ENCODE measurements at regions of chr17 and their contacts with region 1.

Region 1: DNA sequence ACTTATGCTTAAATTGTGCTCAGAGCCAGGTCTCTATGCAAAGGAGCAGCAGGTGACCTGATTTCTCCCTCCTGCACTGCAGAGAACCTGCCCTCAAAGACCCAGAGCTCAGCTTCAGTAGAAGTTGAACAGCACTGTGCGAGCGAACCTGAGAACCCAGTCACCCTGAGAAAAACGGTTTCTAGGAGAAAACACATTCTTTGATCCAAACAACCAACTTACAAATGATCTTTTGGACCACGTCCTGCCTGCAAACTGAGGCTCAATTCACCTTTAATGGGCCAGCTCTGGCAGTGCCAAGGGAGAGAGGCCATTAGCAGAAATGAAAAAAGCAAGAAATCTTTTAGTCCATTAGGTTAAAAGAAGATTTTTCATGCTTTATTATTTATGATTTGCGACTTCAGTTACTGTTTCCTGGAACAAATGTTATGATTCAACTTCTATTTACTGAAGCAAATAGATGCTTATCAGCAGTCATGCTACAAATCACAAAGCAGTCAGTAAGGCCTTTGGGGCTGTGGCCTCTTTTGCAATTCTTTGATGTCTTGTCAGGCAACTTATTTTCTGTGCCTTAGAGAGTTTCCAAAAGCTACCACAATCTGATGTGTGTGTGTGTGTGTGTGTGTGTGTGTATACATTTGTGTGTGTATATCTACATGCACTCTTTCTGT is 65.7 kb upstream of the LRRC37A3 start:
- DNase-seq: peak; percentile 75
- ATAC-seq: peak; percentile 63
- H3K4me3 Mint-ChIP-seq: peak overlapping the region; percentile 74
- H3K27ac Mint-ChIP-seq: peak overlapping the region; percentile 99
- H3K4me1 Mint-ChIP-seq: peaks cover 47% of the 10 kb centered on the region
- H3K27me3 Mint-ChIP-seq: no peaks in the 10 kb centered on the region

Region 2: GRCh38 chr17:64968652-64969501 is 16.1 kb before region 1 on chr17:
- CTCF ChIA-PET with region 1: interaction called, 31 read pairs
- POLR2A ChIA-PET with region 1: interaction called, 96 read pairs
- DNase-seq: no peak
- ATAC-seq: no peak
- H3K4me3 Mint-ChIP-seq: peak overlapping the region; percentile 30
- H3K27ac Mint-ChIP-seq: peak overlapping the region; percentile 82
- H3K4me1 Mint-ChIP-seq: peaks cover 69% of the 10 kb centered on the region
- H3K27me3 Mint-ChIP-seq: no peaks in the 10 kb centered on the region

Region 3: DNA sequence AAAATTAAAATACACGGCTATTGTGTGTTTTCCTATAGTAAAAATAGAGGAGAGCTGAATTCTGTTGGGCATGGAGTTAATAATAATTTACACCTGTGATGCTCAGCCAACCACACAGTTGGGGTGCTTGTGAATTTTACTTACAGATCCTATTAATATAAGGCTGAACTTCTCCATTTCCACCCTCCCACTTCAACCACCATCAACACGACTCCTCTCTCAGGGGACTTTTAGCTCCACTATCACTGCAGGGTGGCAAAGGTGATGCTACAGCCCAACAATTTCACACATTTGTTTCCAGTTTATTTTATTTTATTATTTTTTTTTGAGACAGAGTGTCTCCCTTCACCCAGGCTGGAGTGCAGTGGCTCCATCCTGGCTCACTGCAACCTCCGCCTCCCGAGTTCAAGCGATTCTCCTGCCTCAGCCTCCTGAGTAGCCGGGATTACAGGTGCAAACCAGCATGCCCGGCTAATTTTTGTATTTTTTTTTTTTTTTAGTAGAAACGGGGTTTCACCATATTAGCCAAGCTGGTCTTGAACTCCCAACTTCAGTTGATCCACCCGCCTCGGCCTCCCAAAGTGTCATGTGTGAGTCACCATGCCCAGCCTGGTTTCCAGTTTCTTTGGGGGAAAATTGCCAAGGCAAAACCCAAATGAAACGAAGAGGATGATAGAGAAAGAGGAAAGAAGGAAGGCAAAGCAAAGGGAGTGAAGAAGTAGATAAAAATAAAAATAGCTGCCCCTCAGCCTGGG is 13.6 kb after region 1 on chr17:
- CTCF ChIA-PET with region 1: no interaction called
- POLR2A ChIA-PET with region 1: no interaction called
- DNase-seq: no peak
- ATAC-seq: no peak
- H3K4me3 Mint-ChIP-seq: no peak overlapping the region
- H3K27ac Mint-ChIP-seq: no peak overlapping the region
- H3K4me1 Mint-ChIP-seq: no peaks in the 10 kb centered on the region
- H3K27me3 Mint-ChIP-seq: no peaks in the 10 kb centered on the region

Region 4: DNA sequence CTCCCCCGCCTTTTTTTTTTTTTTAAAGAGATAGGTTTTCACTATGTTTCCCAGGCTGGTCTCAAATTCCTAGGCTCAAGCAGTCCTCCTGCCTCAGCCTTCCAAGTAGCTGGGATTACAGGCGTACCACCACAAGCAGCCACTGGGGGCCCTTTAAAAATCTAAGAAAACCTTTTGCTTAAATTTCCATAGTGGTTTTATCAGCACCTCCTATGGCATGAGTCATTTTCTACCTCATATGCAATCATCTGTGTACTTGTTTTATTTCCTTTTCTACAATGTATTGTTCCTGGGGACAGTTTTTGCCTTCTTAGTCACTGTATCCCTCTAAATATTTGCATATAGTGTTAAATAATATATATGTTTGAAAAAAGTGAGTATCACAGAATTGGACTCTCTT is 42.3 kb after region 1 on chr17:
- CTCF ChIA-PET with region 1: interaction called, 3 read pairs
- POLR2A ChIA-PET with region 1: interaction called, 11 read pairs
- DNase-seq: peak; percentile 59
- ATAC-seq: peak; percentile 76
- H3K4me3 Mint-ChIP-seq: no peak overlapping the region
- H3K27ac Mint-ChIP-seq: peak overlapping the region; percentile 23
- H3K4me1 Mint-ChIP-seq: peaks cover 63% of the 10 kb centered on the region
- H3K27me3 Mint-ChIP-seq: no peaks in the 10 kb centered on the region

Region 5: DNA sequence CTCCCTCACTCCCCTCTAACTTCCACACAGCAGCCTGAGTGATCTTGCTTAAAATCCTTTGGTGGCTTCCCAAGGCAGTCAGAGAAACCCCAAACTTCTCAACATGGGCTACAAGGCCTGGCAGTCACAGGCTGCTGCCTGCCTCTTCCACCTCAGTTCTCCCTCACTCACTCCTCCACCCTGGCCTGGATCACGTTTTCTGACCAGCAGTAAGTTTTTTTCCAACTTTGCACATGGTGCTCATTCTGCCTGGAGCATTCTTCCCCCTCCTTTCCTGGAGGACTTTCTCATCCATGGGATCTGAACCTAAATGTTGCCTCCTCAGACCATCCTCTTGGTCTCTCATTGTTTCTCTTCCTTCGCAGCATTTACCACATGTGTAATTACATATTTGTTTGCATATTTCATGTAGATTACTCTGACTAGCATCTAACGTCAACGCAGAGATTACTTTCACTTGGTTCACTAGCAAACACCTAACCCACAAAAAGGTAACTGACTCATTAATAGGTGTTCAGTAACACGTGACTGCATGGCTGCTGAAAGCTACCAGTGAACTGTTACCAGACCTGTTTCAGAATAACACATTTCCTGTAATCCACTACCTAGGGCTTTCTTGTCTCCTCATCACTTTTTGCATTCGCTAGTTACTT is 54.5 kb after region 1 on chr17:
- CTCF ChIA-PET with region 1: no interaction called
- POLR2A ChIA-PET with region 1: interaction called, 14 read pairs
- DNase-seq: peak; percentile 71
- ATAC-seq: peak; percentile 88
- H3K4me3 Mint-ChIP-seq: peak overlapping the region; percentile 41
- H3K27ac Mint-ChIP-seq: peak overlapping the region; percentile 83
- H3K4me1 Mint-ChIP-seq: peaks cover 80% of the 10 kb centered on the region
- H3K27me3 Mint-ChIP-seq: no peaks in the 10 kb centered on the region

Region 6: GRCh38 chr17:65055348-65056261 is 70.6 kb after region 1 on chr17:
- CTCF ChIA-PET with region 1: interaction called, 5 read pairs
- POLR2A ChIA-PET with region 1: interaction called, 21 read pairs
- DNase-seq: peak; percentile 61
- ATAC-seq: peak; percentile 46
- H3K4me3 Mint-ChIP-seq: peak overlapping the region; percentile 93
- H3K27ac Mint-ChIP-seq: peak overlapping the region; percentile 88
- H3K4me1 Mint-ChIP-seq: peaks cover 50% of the 10 kb centered on the region
- H3K27me3 Mint-ChIP-seq: peaks cover 9% of the 10 kb centered on the region

Region 7: DNA sequence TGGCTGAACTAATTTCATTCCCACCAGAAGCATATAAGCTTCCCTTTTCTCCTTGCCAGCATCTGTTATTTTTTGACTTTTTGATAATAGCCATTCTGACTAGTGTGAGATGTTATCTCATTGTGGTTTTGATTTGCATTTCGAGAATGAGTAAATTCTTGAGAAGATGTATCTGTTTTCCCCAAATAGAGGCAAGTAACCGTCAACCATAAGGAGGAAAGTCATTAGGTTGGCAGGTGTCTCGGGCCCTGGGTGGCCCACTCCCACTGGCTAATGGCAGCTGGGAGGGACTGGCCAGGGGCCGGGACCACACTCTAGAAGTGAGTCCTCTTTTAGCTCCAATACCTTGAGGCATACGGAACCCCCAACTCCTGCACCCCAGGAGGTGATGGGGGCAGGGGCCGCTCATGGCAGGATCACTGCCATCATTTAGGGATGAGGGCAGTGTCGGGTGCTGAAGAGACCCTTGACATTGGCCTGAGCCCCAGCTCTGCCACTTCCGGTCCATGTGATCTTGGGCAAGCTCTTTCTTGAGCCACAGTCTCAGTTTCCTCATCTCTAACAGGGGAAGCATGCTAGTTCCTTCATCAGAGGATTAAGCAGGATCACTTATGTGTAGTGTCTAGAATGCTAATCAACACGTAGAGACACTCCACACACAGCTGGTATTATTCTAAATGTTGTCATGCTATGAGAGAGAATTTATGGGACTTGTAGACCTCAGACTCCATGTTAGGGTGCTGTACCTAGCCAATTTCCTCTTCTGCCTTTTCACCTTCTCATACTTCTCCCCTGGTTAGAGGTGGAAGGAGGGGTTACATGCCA is 196.5 kb after region 1 on chr17:
- CTCF ChIA-PET with region 1: no interaction called
- POLR2A ChIA-PET with region 1: interaction called, 10 read pairs
- DNase-seq: no peak
- ATAC-seq: peak; percentile 18
- H3K4me3 Mint-ChIP-seq: no peak overlapping the region
- H3K27ac Mint-ChIP-seq: peak overlapping the region; percentile 82
- H3K4me1 Mint-ChIP-seq: peaks cover 75% of the 10 kb centered on the region
- H3K27me3 Mint-ChIP-seq: no peaks in the 10 kb centered on the region

Measured in activated CD8-positive, alpha-beta T cell treated with anti-CD3 and anti-CD28 coated beads, Interleukin-2, amount 10 ng/mL, durations not matched to agents 7 days and 5 days (primary cell).